KBM-7 (cell line): ENCODE measurements at regions of chr9 and their contacts with region 1.

Region 1: GRCh38 chr9:95127249-95128176 is 190.0 kb downstream of the FANCC start:
- DNase-seq: peak; percentile 69

Region 2: GRCh38 chr9:94783102-94783664 is 344.3 kb before region 1 on chr9:
- in situ Hi-C with region 1: loop called (anchors 25 kb)
- DNase-seq: peak; percentile 59